ENCODE measurements at regions of chr20 and their contacts with region 1.

Region 1: GRCh38 chr20:34312544-34313217 is 9.5 kb upstream of the AHCY start:
- DNase-seq: peak; percentile 75 to 92
- H3K4me3 ChIP-seq: no peak overlapping the region
- H3K27ac ChIP-seq: peak overlapping the region; percentile 98; the same call in 1 of the 2 replicates
- H3K4me1 ChIP-seq: peaks cover 50% of the 10 kb centered on the region
- H3K27me3 ChIP-seq: no peaks in the 10 kb centered on the region
- CTCF ChIP-seq: peak; percentile 98

Region 2: DNA sequence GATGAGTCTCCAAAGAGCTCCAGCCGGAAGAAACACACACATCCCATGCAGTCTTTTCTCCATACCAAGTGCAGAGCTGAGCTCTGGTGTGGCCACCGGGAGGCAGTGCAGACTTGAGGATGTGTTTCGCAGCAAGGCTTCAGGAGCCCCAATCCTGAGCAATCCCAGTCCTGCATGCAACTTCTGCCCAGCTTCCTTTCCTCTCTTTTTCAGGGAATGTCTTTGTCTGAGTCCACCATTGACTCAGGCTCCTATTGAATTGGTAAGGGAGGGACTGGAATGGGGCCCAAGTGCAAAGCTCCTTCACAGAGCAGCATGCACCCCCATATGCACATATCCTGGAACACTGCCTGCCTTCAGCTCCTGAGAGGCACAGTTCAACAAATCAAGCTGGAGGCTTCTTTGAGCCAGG is 122.0 kb before region 1 on chr20:
- CTCF ChIA-PET with region 1: interaction called, 6 read pairs
- POLR2A ChIA-PET with region 1: no interaction called
- intact Hi-C with region 1: loop called (anchors 2 kb)
- DNase-seq: peak; percentile 45 to 78
- H3K4me3 ChIP-seq: no peak overlapping the region
- H3K27ac ChIP-seq: no peak overlapping the region
- H3K4me1 ChIP-seq: no peaks in the 10 kb centered on the region
- H3K27me3 ChIP-seq: peaks cover 8% of the 10 kb centered on the region; the same call in 1 of the 2 replicates
- CTCF ChIP-seq: peak; percentile 78

Region 3: DNA sequence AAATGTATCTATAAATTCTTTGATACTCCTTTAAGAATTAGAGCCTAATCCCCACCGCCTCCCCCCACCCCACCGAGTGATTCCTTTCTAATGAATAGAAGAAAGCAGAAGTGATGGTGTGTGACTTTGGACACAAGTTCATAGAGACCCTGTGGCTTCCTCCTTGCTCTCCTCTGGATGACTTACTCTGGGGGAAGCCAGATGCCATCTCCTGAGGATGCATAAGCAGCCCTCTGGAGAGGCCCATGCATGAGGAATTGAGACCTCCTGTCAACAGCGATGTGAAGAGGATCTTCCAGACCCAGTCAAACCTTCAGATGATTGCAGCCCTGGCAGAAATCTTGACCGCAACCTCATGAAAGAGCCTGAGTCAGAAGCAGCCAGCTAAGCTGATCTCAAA is 30.6 kb before region 1 on chr20:
- CTCF ChIA-PET with region 1: no interaction called
- POLR2A ChIA-PET with region 1: no interaction called
- intact Hi-C with region 1: no loop called
- DNase-seq: no peak
- H3K4me3 ChIP-seq: no peak overlapping the region
- H3K27ac ChIP-seq: no peak overlapping the region
- H3K4me1 ChIP-seq: no peaks in the 10 kb centered on the region
- H3K27me3 ChIP-seq: no peaks in the 10 kb centered on the region
- CTCF ChIP-seq: no peak

Region 4: DNA sequence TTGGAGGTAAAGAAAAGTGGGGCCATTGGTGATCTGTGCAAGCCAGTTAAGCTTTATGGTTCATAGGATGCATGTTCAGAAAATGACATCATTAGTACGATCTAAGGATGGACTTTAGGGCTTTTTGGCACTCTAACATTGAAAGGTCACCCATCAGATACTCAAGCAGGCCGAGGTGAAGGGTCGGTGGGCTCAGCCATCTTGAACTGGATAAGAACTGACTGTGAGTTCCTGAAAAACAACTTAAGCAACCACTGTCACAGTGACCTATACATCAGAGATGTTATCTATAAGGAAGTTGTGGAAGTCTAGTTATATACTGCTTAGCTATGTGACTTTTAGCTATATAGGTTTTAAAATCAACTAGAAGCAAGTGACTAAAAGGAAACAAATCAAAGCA is 37.4 kb after region 1 on chr20:
- CTCF ChIA-PET with region 1: interaction called, 5 read pairs
- POLR2A ChIA-PET with region 1: no interaction called
- intact Hi-C with region 1: loop called (anchors 1 kb)
- DNase-seq: peak in 1 of 2 experiments; percentile 96
- H3K4me3 ChIP-seq: peak overlapping the region; percentile 2; the same call in 1 of the 2 replicates
- H3K27ac ChIP-seq: peak overlapping the region; percentile 94
- H3K4me1 ChIP-seq: peaks cover 30% of the 10 kb centered on the region
- H3K27me3 ChIP-seq: no peaks in the 10 kb centered on the region
- CTCF ChIP-seq: no peak

Region 5: DNA sequence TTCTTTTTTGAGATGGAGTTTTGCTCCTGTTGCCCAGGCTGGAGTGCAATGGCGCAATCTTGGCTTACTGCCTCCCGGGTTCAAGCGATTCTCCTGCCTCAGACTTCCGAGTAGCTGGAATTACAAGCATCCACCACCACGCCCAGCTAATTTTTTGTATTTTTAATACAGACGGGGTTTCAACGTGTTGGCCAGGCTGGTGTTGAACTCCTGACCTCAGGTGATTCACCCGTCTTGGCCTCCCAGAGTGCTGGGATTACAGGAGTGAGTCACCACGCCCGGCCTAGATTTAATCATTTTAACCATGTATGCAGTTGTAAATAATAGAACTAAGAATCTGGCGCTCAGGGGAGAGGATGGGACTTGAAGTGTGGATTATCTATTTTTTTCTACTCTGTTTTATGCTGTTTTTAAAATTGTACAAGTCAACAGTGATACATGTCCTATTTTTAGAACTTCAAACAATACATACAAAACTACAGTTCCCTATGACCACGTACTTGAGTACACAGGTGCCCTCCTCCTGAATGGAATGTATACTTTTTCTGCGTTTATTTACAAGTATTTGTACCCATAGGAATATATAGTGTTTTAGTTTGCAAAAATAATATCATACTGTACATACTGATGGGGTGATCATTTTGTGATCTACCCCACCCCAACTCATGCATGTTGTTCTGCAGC is 78.2 kb after region 1 on chr20:
- CTCF ChIA-PET with region 1: interaction called, 5 read pairs
- POLR2A ChIA-PET with region 1: interaction called, 3 read pairs
- intact Hi-C with region 1: loop called (anchors 1 kb)
- DNase-seq: peak; percentile 94 to 96
- H3K4me3 ChIP-seq: peak overlapping the region; percentile 31; the same call in 1 of the 2 replicates
- H3K27ac ChIP-seq: peak overlapping the region; percentile 76
- H3K4me1 ChIP-seq: peaks cover 59% of the 10 kb centered on the region
- H3K27me3 ChIP-seq: no peaks in the 10 kb centered on the region
- CTCF ChIP-seq: no peak

Region 6: GRCh38 chr20:34420146-34420545 is 107.5 kb after region 1 on chr20:
- CTCF ChIA-PET with region 1: interaction called, 7 read pairs
- POLR2A ChIA-PET with region 1: interaction called, 3 read pairs
- intact Hi-C with region 1: loop called (anchors 5 kb)
- DNase-seq: no peak
- H3K4me3 ChIP-seq: no peak overlapping the region
- H3K27ac ChIP-seq: peak overlapping the region; percentile 11
- H3K4me1 ChIP-seq: 0 out of 2 replicates have a peak, but pooled peaks cover 2% of the 10 kb centered on the region
- H3K27me3 ChIP-seq: no peaks in the 10 kb centered on the region
- CTCF ChIP-seq: no peak

Region 7: DNA sequence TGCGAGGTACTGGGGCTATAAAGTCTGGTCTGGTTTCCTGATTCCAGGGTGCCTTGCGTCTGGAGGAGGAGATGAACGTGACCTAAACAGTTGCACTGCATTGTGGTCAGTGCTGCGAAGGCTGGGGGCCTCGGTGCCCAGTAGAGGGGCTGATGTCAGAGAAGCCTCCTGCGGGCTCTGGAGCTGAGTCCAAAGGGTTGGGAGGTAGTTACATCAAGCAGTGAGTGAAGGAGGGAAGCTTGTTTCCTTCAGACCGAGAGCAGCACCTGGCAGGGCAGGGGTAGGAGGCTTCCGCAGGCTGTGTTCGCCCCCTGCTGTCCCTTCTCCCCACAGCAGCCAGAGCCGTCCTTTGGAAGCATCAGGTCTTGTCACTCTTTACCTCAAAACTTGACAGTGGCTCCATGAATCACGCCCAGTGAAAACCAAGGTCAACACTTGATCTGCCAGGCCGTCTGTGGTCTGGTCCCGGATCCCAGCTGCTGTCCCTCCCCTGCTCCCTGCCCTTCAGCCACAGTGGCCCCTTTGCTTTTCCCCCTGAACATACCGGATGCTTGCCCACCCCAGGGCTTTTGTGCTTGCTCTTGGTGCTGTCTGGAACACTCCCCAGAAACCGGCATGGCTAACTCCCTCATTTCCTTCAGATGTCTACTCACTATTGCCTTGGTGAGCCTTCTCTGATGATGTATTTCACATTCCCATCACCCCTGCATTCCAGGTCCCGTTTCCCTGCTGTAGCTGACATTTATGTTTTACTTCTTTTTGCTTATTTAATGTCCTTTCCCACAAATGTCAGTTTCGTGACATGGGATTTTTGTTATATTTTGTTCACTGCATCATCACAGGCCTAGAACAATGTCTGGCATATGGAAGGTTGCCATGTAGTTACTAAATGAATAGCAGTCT is 210.5 kb after region 1 on chr20:
- CTCF ChIA-PET with region 1: interaction called, 7 read pairs
- POLR2A ChIA-PET with region 1: no interaction called
- intact Hi-C with region 1: loop called (anchors 1 kb)
- DNase-seq: peak; percentile 44 to 55
- H3K4me3 ChIP-seq: no peak overlapping the region
- H3K27ac ChIP-seq: no peak overlapping the region
- H3K4me1 ChIP-seq: peaks cover 37% of the 10 kb centered on the region
- H3K27me3 ChIP-seq: no peaks in the 10 kb centered on the region
- CTCF ChIP-seq: peak; percentile 57

Region 8: DNA sequence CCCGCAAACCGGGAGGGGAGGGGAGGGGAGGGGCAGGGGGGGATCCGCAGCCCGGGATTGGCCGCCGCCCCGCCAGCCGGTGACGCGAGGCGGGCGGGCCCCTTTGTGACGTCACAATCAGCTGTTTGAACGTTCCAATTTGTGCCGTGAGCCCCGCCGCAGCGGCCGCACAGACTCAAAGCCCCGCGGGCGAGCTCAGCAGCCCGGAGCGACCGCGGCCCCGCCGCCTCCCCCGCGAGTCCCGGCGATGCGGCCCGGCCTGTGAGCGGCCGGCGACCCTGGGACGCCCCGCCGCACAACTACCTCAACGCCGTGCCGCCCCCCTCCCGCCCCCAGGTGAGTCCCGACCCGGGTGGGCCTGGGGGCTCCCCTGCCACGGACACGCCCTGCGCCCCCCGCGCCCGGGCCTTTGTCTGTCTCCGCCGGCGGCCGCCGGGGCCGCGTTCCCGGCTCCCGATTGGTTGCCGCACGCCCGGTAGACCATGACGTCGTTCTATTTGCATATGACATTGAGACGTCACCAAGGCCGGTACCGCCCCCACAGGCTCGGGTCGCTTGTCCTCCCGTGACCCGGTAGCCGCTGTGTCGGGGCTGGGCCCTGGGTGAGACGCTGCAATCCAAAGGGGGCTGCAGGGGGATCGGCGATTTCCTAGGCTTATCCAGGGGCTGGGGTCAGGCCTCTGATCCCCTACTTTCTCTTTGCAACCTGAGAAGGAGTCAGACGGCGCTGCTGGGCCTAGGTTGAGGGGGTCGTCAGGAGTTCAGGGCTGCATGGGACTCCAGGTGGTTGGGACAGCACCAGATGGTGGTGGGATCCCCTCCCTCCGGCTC is 391.7 kb after region 1 on chr20 and contains the start of gene TP53INP2:
- CTCF ChIA-PET with region 1: no interaction called
- POLR2A ChIA-PET with region 1: interaction called, 17 read pairs
- intact Hi-C with region 1: loop called (anchors 2 kb)
- DNase-seq: peak; percentile 61 to 80
- H3K4me3 ChIP-seq: peak within 1 kb of the TSS; percentile 64
- H3K27ac ChIP-seq: peak within 1 kb of the TSS; percentile 16; the same call in 1 of the 2 replicates
- H3K4me1 ChIP-seq: peaks cover 34% of the 10 kb centered on the region
- H3K27me3 ChIP-seq: no peaks in the 10 kb centered on the region
- CTCF ChIP-seq: no peak
- total RNA-seq, gene TP53INP2: 4.4 and 4.9 TPM in 2 replicates